K562 (cell line): ENCODE measurements at regions of chr20 and their contacts with region 1.

Region 1: GRCh38 chr20:58650776-58651558 is at the start of gene STX16:
- DNase-seq: peak; percentile 92 to 96 (median 94)
- ATAC-seq: peak; percentile 91
- H3K4me3 ChIP-seq: peak within 1 kb of the TSS; percentile 81
- H3K27ac ChIP-seq: peak within 1 kb of the TSS; percentile 91
- H3K4me1 ChIP-seq: peaks cover 10 to 20% of the 10 kb centered on the region in 2 experiments; a peak in 4 of 5 replicates
- H3K27me3 ChIP-seq: no peaks in the 10 kb centered on the region
- CTCF ChIP-seq: peak; percentile 68 to 75 (median 73)
- EP300 ChIP-seq: peak; percentile 56
- POLR2A ChIP-seq: peak; percentile 89
- RAD21 ChIP-seq: peak; percentile 48 to 51
- polyA plus RNA-seq, gene STX16: 4.4 to 4.9 TPM

Region 2: DNA sequence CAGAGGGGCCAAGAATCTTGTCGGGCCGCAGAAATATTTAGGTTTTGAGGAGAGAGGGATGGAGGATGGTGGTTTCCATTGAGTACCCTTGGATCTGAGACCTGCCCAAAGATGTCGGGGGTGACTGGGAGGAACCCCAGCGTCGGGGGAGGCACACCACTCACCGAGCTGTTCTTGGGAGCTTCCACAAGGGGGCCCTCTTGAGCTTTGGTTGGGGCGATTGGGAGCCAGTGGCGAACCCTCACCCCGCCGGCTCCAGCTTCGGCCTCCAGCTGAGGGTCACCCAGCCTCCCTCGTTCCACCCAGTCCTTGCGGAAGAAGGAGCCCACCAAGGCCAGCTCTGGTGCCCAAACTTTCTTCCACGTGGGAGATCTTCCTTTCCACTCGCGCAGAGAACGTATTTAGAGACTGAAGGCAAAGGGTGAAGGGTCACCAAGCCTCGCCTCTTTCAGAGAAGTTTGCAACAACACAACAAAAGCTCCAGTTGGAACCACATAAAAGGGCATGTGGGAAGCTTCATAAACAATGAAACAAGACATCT is 169.4 kb before region 1 on chr20:
- CTCF ChIA-PET with region 1: no interaction called
- POLR2A ChIA-PET with region 1: interaction called, 3 read pairs
- in situ Hi-C with region 1: no loop called
- intact Hi-C with region 1: loop called (anchors 2 kb)
- DNase-seq: peak; percentile 74 to 86 (median 83)
- ATAC-seq: peak; percentile 97
- H3K4me3 ChIP-seq: no peak overlapping the region
- H3K27ac ChIP-seq: no peak overlapping the region
- H3K4me1 ChIP-seq: peaks cover 3 to 4% of the 10 kb centered on the region in 2 experiments; a peak in 3 of 5 replicates
- H3K27me3 ChIP-seq: peaks cover 8 to 24% of the 10 kb centered on the region in 2 experiments; a peak in 4 of 5 replicates
- CTCF ChIP-seq: peak; percentile 79 to 90 (median 83)
- EP300 ChIP-seq: no peak
- POLR2A ChIP-seq: no peak
- RAD21 ChIP-seq: peak; percentile 75 to 87

Region 3: GRCh38 chr20:58511364-58511763 is 139.6 kb before region 1 on chr20:
- CTCF ChIA-PET with region 1: no interaction called
- POLR2A ChIA-PET with region 1: no interaction called
- in situ Hi-C with region 1: no loop called
- intact Hi-C with region 1: no loop called
- DNase-seq: no peak
- ATAC-seq: no peak
- H3K4me3 ChIP-seq: no peak overlapping the region
- H3K27ac ChIP-seq: no peak overlapping the region
- H3K4me1 ChIP-seq: peaks cover 0 to 15% of the 10 kb centered on the region in 2 experiments; a peak in 2 of 5 replicates
- H3K27me3 ChIP-seq: peaks cover 22 to 62% of the 10 kb centered on the region in 2 experiments; a peak in 3 of 5 replicates
- CTCF ChIP-seq: no peak
- EP300 ChIP-seq: no peak
- POLR2A ChIP-seq: no peak
- RAD21 ChIP-seq: no peak

Region 4: GRCh38 chr20:58640446-58640845 is 10.5 kb before region 1 on chr20:
- CTCF ChIA-PET with region 1: no interaction called
- POLR2A ChIA-PET with region 1: interaction called, 16 read pairs
- in situ Hi-C with region 1: no loop called
- intact Hi-C with region 1: no loop called
- DNase-seq: peak; percentile 37 to 52 (median 43)
- ATAC-seq: peak; percentile 71
- H3K4me3 ChIP-seq: no peak overlapping the region
- H3K27ac ChIP-seq: peak overlapping the region; percentile 52; the same call in 2 of the 3 replicates
- H3K4me1 ChIP-seq: peaks cover 11 to 13% of the 10 kb centered on the region in 2 experiments; a peak in 4 of 5 replicates
- H3K27me3 ChIP-seq: peaks cover 0 to 11% of the 10 kb centered on the region in 2 experiments; a peak in 2 of 5 replicates
- CTCF ChIP-seq: no peak
- EP300 ChIP-seq: no peak
- POLR2A ChIP-seq: no peak
- RAD21 ChIP-seq: no peak

Region 5: DNA sequence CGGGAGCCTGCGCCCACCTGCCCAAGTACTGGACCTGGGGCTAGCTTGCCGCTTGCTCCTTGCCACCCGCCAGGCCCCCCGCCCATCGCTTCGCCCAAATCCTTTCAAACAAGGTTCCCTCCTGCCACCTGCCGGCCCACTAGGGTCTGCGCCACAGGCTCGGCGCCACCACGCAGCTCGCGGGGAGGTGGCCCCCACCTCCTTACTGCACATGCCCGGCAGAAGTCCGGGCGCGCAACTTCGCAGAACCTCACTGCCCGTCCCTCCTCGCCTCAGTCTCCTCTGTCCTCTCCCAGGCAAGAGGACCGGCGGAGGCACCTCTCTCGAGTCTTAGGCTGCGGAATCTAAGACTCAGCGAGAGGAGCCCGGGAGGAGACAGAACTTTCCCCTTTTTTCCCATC is 188.5 kb after region 1 on chr20:
- CTCF ChIA-PET with region 1: no interaction called
- POLR2A ChIA-PET with region 1: no interaction called
- in situ Hi-C with region 1: loop called (anchors 10 kb)
- intact Hi-C with region 1: loop called (anchors 5 kb)
- DNase-seq: peak; percentile 50 to 61 (median 58)
- ATAC-seq: peak; percentile 91
- H3K4me3 ChIP-seq: no peak overlapping the region
- H3K27ac ChIP-seq: no peak overlapping the region
- H3K4me1 ChIP-seq: peaks cover 0 to 12% of the 10 kb centered on the region in 2 experiments; a peak in 1 of 5 replicates
- H3K27me3 ChIP-seq: peaks cover 18 to 44% of the 10 kb centered on the region in 2 experiments; a peak in 4 of 5 replicates
- CTCF ChIP-seq: peak; percentile 55 to 65 (median 59)
- EP300 ChIP-seq: no peak
- POLR2A ChIP-seq: no peak
- RAD21 ChIP-seq: peak; percentile 28 to 65